ENCODE measurements at regions of chr11 and their contacts with region 1.

Region 1: GRCh38 chr11:65988791-65989592 is 13.0 kb downstream of the EIF1AD start:
- DNase-seq: peak; percentile 89
- H3K4me3 ChIP-seq: no peak overlapping the region
- H3K27ac ChIP-seq: peak overlapping the region in 6 of 8 donors; percentile 4 to 54 (median 44)
- H3K4me1 ChIP-seq: peaks cover 0 to 14% (median 9%) of the 10 kb centered on the region in 6 donors
- H3K27me3 ChIP-seq: no peaks in the 10 kb centered on the region
- CTCF ChIP-seq: peak; percentile 87 to 99 (median 98)
- POLR2A ChIP-seq: no peak

Region 2: DNA sequence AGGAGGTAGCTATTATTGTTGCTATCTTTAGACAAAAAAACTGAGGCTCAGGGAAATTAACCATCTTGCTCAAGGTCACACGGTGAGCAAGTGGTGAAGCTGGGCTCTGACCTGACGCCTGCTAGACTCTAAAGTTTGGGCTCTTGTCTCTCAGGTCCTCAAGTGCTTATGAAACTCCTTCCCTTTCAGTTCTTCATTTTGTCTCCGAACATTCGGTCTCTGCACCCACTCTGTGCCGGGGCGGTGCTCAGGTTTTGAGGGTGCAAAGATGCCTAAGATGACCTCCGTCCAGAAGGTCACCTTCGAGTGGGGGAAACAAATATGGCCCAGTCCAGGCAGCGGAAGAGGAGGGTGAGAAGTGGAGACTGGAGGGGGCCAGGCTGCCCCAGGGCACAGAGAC is 186.2 kb before region 1 on chr11:
- intact Hi-C with region 1: no loop called
- DNase-seq: no peak
- H3K4me3 ChIP-seq: peak overlapping the region in 1 of 8 donors; percentile 35
- H3K27ac ChIP-seq: no peak overlapping the region
- H3K4me1 ChIP-seq: peaks cover 0 to 20% (median 7%) of the 10 kb centered on the region in 6 donors
- H3K27me3 ChIP-seq: peaks cover 0 to 79% (median 21%) of the 10 kb centered on the region in 7 donors
- CTCF ChIP-seq: no peak
- POLR2A ChIP-seq: no peak

Region 3: GRCh38 chr11:65888163-65888814 is 100.7 kb before region 1 on chr11 and contains the start of gene FIBP:
- intact Hi-C with region 1: loop called (anchors 5 kb)
- DNase-seq: peak; percentile 100
- H3K4me3 ChIP-seq: peak within 1 kb of the TSS; percentile 63 to 93 (median 88)
- H3K27ac ChIP-seq: peak within 1 kb of the TSS; percentile 92 to 99 (median 96)
- H3K4me1 ChIP-seq: peaks cover 46 to 93% (median 65%) of the 10 kb centered on the region in 6 donors
- H3K27me3 ChIP-seq: no peaks in the 10 kb centered on the region
- CTCF ChIP-seq: peak; percentile 89 to 99 (median 94)
- POLR2A ChIP-seq: peak; percentile 45 to 69 (median 55)
- total RNA-seq, gene FIBP: 52.3 to 79.0 (median 64.9) TPM

Region 4: GRCh38 chr11:66810576-66811185 is 821.7 kb after region 1 on chr11:
- intact Hi-C with region 1: no loop called
- DNase-seq: no peak
- H3K4me3 ChIP-seq: no peak overlapping the region
- H3K27ac ChIP-seq: no peak overlapping the region
- H3K4me1 ChIP-seq: no peaks in the 10 kb centered on the region
- H3K27me3 ChIP-seq: no peaks in the 10 kb centered on the region
- CTCF ChIP-seq: no peak
- POLR2A ChIP-seq: no peak